ENCODE measurements at regions of chr3 and their contacts with region 1.

Region 1: DNA sequence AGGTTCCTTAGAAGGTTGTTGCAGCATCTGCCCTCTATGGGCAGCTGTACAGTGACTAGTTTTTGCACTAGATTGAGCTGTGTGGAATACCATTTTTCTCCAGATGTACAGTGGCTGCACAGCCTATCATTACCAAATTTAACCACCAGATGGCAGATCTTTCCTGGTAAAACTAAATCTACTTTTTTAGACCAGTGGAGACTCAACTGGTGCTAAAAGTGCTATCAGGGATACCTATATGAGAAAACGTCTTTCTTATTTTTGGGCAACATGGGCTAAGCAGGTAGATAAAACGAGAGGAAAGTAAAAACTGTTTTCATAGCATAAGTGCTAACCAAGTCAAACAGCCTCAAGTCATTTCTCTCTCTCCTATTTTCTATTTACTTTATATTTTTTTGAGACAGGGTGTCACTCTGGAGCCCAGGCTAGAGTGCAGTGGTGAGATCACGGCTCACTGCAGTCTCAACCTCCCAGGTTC is 21.2 kb downstream of the IGSF10 start:
- DNase-seq: no peak

Region 2: DNA sequence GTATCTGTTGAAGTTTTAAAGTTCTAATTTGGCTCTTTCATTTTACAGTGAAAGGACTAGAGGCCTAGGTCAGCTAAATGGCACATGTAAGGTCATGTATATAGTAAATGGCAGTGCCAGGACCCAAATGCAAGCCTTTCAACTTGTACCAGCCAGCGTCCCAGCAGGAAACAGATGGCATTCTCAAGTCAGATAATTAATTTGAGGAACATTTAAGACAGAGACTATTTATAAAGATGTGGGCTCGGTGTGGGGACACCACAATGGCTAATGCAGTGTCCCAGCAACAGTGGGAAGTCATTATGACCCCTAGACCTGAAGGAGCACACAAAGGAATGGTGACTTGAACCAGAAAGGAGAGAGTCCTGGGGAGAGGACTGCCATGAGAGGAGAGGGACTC is 540.5 kb before region 1 on chr3:
- intact Hi-C with region 1: no loop called
- DNase-seq: no peak

Region 3: GRCh38 chr3:151197981-151198767 is 241.5 kb before region 1 on chr3:
- intact Hi-C with region 1: no loop called
- DNase-seq: no peak

Region 4: DNA sequence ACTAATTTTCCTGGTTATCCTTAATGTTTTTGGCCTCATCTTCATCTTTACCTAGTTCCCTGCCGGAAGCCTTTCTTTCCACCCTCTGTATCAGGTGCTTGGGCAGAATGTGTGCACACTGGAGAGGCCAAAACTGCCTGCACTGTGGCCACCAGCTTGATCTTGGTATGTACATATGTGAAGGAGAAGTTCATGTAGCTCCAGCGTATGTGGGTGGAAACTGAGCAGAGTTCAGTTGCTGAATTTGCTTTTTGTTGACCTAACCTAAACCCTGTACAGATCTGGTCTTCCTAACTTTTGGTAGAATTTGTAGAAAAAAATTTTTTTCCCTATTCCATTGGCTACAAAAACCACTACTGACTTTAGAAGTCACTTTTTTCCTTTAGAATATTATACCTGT is 87.1 kb after region 1 on chr3:
- intact Hi-C with region 1: no loop called
- DNase-seq: no peak

Region 5: DNA sequence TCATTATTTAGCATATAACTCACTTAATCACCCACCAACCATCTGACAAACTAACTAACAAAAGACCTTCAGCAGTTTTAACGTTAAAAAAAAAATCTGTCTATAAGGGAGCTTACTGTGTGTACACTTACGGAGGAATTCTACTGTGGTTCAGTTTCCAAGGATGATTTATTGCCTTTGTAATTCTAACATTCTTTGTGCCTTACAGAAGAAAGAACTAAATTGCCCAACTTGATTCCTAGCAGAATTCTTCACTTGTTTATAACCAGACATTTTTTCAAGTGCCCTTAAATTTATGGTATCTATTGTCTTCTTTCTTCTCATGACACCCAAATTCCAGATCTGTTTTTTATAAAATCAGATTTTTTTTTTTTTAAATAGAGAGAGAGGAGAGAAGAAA is 140.9 kb after region 1 on chr3:
- intact Hi-C with region 1: no loop called
- DNase-seq: no peak

Region 6: DNA sequence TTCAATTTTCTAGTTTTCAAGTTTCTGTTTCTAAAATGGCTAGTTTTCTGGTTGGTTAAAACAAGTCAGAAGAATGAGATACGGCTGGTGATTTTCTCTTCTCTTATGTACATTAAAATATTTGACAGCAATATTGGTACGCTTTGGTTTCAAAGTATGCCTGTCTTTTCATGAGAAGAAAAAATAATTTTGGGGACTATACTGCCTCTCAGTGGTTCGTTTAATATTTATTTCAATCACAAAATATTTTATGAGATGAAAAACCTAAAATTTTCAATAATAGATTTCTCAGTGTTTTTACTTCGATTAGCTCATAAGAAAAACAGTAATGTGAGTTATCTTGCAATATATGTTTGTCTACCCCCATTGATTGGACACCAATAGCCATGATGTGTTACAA is 221.2 kb after region 1 on chr3:
- intact Hi-C with region 1: loop called (anchors 2 kb)
- DNase-seq: no peak

Region 7: DNA sequence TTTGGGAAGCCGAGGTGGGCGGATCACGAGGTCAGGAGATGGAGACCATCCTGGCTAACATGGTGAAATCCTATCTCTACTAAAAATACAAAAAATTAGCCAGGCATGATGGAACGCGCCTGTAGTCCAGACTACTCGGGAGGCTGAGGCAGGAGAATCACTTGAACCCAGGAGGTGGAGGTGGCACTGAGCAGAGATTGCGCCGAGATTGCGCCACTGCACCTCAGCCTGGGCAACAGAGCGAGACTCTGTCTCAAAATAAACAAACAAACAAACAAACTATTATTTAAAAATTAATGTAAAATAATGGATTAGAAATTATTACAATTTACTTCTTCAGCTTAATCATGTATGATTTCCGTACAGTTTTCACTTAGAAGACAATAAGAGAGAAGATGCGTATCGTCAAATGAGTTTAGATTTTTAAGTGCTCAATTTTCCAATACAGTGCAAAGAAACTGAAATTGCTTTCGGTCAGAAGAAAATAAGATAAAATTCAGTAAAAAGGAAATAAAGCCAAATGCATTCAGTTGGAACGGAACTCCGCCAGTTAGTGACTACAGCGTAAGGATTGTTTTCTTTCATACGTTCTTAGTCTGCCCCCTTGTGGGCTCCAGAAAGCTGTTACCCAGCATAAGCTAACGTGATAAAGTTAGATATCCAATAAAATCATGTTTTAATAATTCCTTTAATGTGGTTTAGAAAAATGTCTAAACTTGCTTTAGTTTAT is 399.1 kb after region 1 on chr3:
- intact Hi-C with region 1: loop called (anchors 1 kb)
- DNase-seq: peak in 5 of 10 donors; percentile 18 to 71 (median 46)

Measured in posterior cingulate gyrus (tissue), 11 donors.